IMR-90 (cell line): ENCODE measurements at regions of chr16 and their contacts with region 1.

Region 1: GRCh38 chr16:75224306-75225091 is 5.7 kb downstream of the CTRB1 start:
- DNase-seq: no peak
- ATAC-seq: peak; percentile 25
- H3K4me3 ChIP-seq: no peak overlapping the region
- H3K27ac ChIP-seq: no peak overlapping the region
- H3K4me1 ChIP-seq: no peaks in the 10 kb centered on the region
- H3K27me3 ChIP-seq: no peaks in the 10 kb centered on the region
- CTCF ChIP-seq: no peak
- POLR2A ChIP-seq: no peak
- RAD21 ChIP-seq: no peak

Region 2: GRCh38 chr16:75206749-75207451 is 17.6 kb before region 1 on chr16 and contains the start of gene CTRB2:
- CTCF ChIA-PET with region 1: no interaction called
- POLR2A ChIA-PET with region 1: no interaction called
- dilution Hi-C with region 1: no loop called
- in situ Hi-C with region 1: no loop called
- intact Hi-C with region 1: loop called (anchors 2 kb)
- DNase-seq: no peak
- ATAC-seq: 0 out of 2 replicates have a peak, but pooled peaks have one; percentile 28
- H3K4me3 ChIP-seq: no peak within 1 kb of the TSS
- H3K27ac ChIP-seq: no peak within 1 kb of the TSS
- H3K4me1 ChIP-seq: no peaks in the 10 kb centered on the region
- H3K27me3 ChIP-seq: 0 out of 2 replicates have a peak, but pooled peaks cover 2% of the 10 kb centered on the region
- CTCF ChIP-seq: no peak
- POLR2A ChIP-seq: no peak
- RAD21 ChIP-seq: no peak
- total RNA-seq, gene CTRB2: not detected in 2 replicates